ENCODE measurements at regions of chr1 and their contacts with region 1.

Region 1: DNA sequence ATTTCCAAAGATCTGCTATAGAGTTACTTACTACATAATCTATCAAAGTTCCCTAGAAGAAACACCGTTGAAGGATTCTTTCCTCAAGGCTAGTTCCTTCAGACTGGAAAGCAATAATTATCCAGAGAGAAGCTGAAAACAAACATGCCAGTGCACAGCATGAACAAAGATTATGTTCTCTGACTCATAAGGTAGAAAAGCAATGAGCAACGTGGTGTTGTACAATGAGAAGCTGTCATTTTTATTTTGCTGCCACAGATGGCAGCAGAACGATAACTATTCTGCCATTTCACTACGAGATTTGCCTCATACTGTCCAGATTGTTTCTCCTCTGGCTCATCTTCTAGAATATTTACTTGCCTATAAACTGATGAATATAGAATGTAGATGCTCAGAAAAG is 10.7 kb downstream of the EXTL2 start:
- DNase-seq: peak; percentile 28
- ATAC-seq: peak; percentile 87
- H3K4me3 ChIP-seq: no peak overlapping the region
- H3K27ac ChIP-seq: no peak overlapping the region
- H3K4me1 ChIP-seq: peaks cover 17% of the 10 kb centered on the region
- H3K27me3 ChIP-seq: no peaks in the 10 kb centered on the region
- CTCF ChIP-seq: no peak
- EP300 ChIP-seq: no peak
- POLR2A ChIP-seq: no peak
- RAD21 ChIP-seq: no peak

Region 2: GRCh38 chr1:100895540-100896483 is 11.8 kb after region 1 on chr1 and contains the start of gene SLC30A7:
- CTCF ChIA-PET with region 1: no interaction called
- POLR2A ChIA-PET with region 1: interaction called, 14 read pairs
- in situ Hi-C with region 1: no loop called
- intact Hi-C with region 1: no loop called
- DNase-seq: peak; percentile 84
- ATAC-seq: peak; percentile 92
- H3K4me3 ChIP-seq: peak within 1 kb of the TSS; percentile 81 to 97 (median 96)
- H3K27ac ChIP-seq: peak within 1 kb of the TSS; percentile 87
- H3K4me1 ChIP-seq: peaks cover 44% of the 10 kb centered on the region
- H3K27me3 ChIP-seq: no peaks in the 10 kb centered on the region; a peak in 1 of 5 replicates
- CTCF ChIP-seq: no peak
- EP300 ChIP-seq: peak; percentile 23 to 34; a peak in 1 of 4 replicates
- POLR2A ChIP-seq: peak in 1 of 2 experiments; percentile 76; a peak in 3 of 4 replicates
- RAD21 ChIP-seq: no peak
- total RNA-seq, gene SLC30A7: 27.4 and 40.8 TPM in 2 replicates

Region 3: GRCh38 chr1:101288491-101288944 is 404.6 kb after region 1 on chr1:
- CTCF ChIA-PET with region 1: no interaction called
- POLR2A ChIA-PET with region 1: no interaction called
- in situ Hi-C with region 1: no loop called
- intact Hi-C with region 1: no loop called
- DNase-seq: peak; percentile 88
- ATAC-seq: peak; percentile 90
- H3K4me3 ChIP-seq: peak overlapping the region in 1 of 3 experiments; percentile 6; a peak in 1 of 6 replicates
- H3K27ac ChIP-seq: no peak overlapping the region
- H3K4me1 ChIP-seq: peaks cover 51% of the 10 kb centered on the region
- H3K27me3 ChIP-seq: no peaks in the 10 kb centered on the region
- CTCF ChIP-seq: peak; percentile 89
- EP300 ChIP-seq: peak in 1 of 2 experiments; percentile 55; a peak in 2 of 4 replicates
- POLR2A ChIP-seq: no peak
- RAD21 ChIP-seq: peak; percentile 85

Measured in HepG2 (cell line).